ENCODE measurements at regions of chrX and their contacts with region 1.

Region 1: DNA sequence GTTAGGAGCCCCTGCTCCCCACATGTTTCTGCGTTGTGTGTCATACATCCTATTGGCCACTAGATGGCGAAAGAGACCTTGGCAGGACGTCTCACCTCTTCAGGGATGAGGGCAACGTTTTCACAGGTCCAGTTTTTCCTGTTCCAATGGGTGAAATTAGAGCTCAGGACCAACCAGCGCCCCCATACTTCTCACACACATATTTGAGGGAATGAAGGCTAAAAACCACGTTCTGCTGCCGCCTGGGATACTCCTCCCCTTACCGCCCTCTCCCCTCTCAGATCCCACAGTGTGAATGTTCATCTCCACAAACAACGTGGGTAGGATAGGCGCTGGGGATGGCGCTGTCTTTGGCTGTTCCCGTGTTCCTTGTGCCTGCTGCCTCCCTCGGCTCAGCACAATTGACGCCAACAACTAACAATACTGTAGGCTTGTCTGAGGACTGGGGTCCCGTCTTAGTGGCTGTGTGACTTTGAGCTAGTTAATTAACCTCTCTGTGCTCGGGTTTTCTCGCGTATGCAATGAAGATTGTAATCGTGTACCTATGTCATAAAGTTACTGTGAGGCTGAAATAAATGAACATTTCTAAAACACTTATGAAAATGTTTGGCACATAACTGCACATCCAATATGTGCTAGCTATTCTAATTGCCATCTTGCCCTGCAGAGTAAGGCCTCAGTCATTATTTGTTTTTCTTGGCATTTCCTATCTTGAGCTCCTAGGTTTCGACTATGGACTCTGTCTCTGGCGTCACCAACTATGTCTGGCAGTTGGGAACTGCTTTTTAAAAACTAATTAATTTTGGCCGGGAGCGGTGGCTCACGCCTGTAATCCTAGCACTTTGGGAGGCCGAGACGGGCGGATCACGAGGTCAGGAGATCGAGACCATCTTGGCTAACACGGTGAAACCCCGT is 181.3 kb upstream of the STK26 start:
- DNase-seq: no peak
- ATAC-seq: no peak
- H3K4me3 ChIP-seq: no peak overlapping the region
- H3K27ac ChIP-seq: no peak overlapping the region
- H3K4me1 ChIP-seq: no peaks in the 10 kb centered on the region
- H3K27me3 ChIP-seq: no peaks in the 10 kb centered on the region

Region 2: GRCh38 chrX:132071260-132071659 is 229.5 kb after region 1 on chrX:
- intact Hi-C with region 1: loop called in 1 of 2 experiments (anchors 10 kb)
- DNase-seq: no peak
- ATAC-seq: no peak
- H3K4me3 ChIP-seq: no peak overlapping the region
- H3K27ac ChIP-seq: no peak overlapping the region
- H3K4me1 ChIP-seq: no peaks in the 10 kb centered on the region
- H3K27me3 ChIP-seq: no peaks in the 10 kb centered on the region